ENCODE measurements at regions of chr1 and their contacts with region 1.

Region 1: DNA sequence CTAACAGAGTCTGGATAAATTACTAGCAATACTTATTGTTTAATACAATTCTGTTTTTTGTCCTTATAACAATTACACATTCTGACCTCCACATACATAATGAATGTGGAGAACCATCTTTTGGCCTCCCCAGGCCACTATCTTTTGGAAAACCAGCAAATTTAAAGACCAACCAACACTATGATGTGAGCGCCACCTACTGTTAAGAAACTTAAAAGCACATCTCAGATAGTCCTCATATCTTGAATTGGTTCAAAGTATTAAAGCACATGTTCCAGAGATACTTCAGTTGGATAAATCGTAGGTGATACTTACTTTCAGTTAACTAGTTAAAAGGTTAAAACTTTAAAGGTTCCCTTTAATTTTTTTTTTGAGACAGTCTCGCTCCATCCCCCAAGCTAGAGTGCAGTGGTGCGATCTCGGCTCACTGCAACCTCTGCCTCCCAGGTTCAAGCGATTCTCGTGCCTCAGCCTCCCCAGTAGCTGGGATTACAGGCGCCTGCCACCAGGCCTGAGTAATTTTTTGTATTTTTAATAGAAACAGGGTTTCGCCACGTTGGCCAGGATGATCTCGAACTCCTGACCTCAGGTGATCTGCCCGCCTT is 29.3 kb upstream of the USP1 start:
- DNase-seq: peak in 3 of 9 experiments; percentile 18 to 65 (median 60)
- ATAC-seq: no peak
- H3K4me3 ChIP-seq: no peak overlapping the region
- H3K4me3 Mint-ChIP-seq: no peak overlapping the region
- H3K27ac ChIP-seq: no peak overlapping the region
- H3K27ac Mint-ChIP-seq: no peak overlapping the region
- H3K4me1 ChIP-seq: no peaks in the 10 kb centered on the region
- H3K4me1 Mint-ChIP-seq: no peaks in the 10 kb centered on the region
- H3K27me3 ChIP-seq: peaks cover 0 to 3% of the 10 kb centered on the region in 2 experiments
- H3K27me3 Mint-ChIP-seq: no peaks in the 10 kb centered on the region
- CTCF ChIP-seq: peak; percentile 97

Region 2: DNA sequence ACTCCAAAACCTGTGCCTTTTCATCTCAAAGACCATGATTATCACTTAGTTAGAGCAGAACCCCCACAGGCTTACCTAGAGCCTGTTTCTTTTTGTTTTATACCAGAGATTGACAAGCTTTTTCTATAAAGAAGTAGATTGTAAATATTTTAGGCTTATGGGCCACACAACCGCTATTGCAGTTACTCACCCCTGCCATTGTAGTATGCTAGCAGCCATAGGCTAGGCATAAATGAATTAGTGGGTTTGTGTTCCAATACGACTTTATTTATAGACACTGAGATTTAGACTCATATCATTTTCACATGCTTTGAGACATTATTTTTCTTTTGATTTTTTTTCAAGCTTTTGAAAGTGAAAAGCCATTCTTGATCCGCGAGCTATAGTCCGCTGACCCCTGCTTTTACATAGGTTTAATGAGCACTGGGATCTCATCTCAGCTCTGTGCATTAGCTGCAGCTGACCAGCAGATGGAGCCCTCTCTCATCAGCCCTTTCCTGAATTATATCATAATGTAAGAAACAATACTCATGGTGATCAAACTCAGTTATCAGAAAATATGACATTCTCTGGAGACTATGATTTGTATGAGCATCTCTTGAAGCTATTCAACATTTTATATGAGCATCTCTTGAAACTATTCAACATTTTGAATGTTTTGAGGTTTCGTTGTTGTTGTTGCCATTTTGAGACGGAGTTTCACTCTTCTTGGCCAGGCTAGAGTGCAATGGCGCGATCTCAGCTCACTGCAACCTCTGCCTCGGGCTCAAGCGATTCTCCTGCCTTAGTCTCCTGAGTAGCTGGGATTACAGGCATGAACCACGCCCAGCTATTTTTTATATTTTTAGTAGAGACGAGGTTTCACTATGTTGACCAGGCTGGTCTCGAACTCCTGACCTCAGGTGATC is 324.8 kb before region 1 on chr1:
- CTCF ChIA-PET with region 1: interaction called, 4 read pairs
- POLR2A ChIA-PET with region 1: interaction called, 3 read pairs
- intact Hi-C with region 1: loop called (anchors 1 kb)
- DNase-seq: peak in 6 of 9 experiments; percentile 10 to 48 (median 30)
- ATAC-seq: peak; percentile 40
- H3K4me3 ChIP-seq: no peak overlapping the region
- H3K4me3 Mint-ChIP-seq: no peak overlapping the region
- H3K27ac ChIP-seq: no peak overlapping the region
- H3K27ac Mint-ChIP-seq: no peak overlapping the region
- H3K4me1 ChIP-seq: no peaks in the 10 kb centered on the region
- H3K4me1 Mint-ChIP-seq: no peaks in the 10 kb centered on the region
- H3K27me3 ChIP-seq: no peaks in the 10 kb centered on the region
- H3K27me3 Mint-ChIP-seq: no peaks in the 10 kb centered on the region
- CTCF ChIP-seq: peak; percentile 87

Region 3: GRCh38 chr1:62175568-62176179 is 231.8 kb before region 1 on chr1:
- CTCF ChIA-PET with region 1: interaction called, 130 read pairs
- POLR2A ChIA-PET with region 1: no interaction called
- intact Hi-C with region 1: loop called in 1 of 2 experiments (anchors 1 kb)
- DNase-seq: peak in 5 of 9 experiments; percentile 1 to 62 (median 48)
- ATAC-seq: no peak
- H3K4me3 ChIP-seq: no peak overlapping the region
- H3K4me3 Mint-ChIP-seq: no peak overlapping the region
- H3K27ac ChIP-seq: no peak overlapping the region
- H3K27ac Mint-ChIP-seq: no peak overlapping the region
- H3K4me1 ChIP-seq: no peaks in the 10 kb centered on the region
- H3K4me1 Mint-ChIP-seq: no peaks in the 10 kb centered on the region
- H3K27me3 ChIP-seq: peaks cover 0 to 2% of the 10 kb centered on the region in 2 experiments
- H3K27me3 Mint-ChIP-seq: peaks cover 11% of the 10 kb centered on the region
- CTCF ChIP-seq: peak; percentile 78

Region 4: GRCh38 chr1:62271948-62272728 is 135.4 kb before region 1 on chr1:
- CTCF ChIA-PET with region 1: no interaction called
- POLR2A ChIA-PET with region 1: no interaction called
- intact Hi-C with region 1: loop called in 1 of 2 experiments (anchors 1 kb)
- DNase-seq: peak in 8 of 9 experiments; percentile 22 to 79 (median 50)
- ATAC-seq: peak; percentile 90
- H3K4me3 ChIP-seq: no peak overlapping the region
- H3K4me3 Mint-ChIP-seq: peak overlapping the region; percentile 54
- H3K27ac ChIP-seq: peak overlapping the region; percentile 4 to 64
- H3K27ac Mint-ChIP-seq: peak overlapping the region; percentile 90
- H3K4me1 ChIP-seq: peaks cover 25% of the 10 kb centered on the region
- H3K4me1 Mint-ChIP-seq: peaks cover 30% of the 10 kb centered on the region
- H3K27me3 ChIP-seq: no peaks in the 10 kb centered on the region
- H3K27me3 Mint-ChIP-seq: no peaks in the 10 kb centered on the region
- CTCF ChIP-seq: peak; percentile 13

Region 5: GRCh38 chr1:62299426-62300200 is 107.9 kb before region 1 on chr1:
- CTCF ChIA-PET with region 1: no interaction called
- POLR2A ChIA-PET with region 1: no interaction called
- intact Hi-C with region 1: no loop called
- DNase-seq: no peak
- ATAC-seq: no peak
- H3K4me3 ChIP-seq: no peak overlapping the region
- H3K4me3 Mint-ChIP-seq: no peak overlapping the region
- H3K27ac ChIP-seq: no peak overlapping the region
- H3K27ac Mint-ChIP-seq: no peak overlapping the region
- H3K4me1 ChIP-seq: peaks cover 13% of the 10 kb centered on the region
- H3K4me1 Mint-ChIP-seq: peaks cover 14% of the 10 kb centered on the region
- H3K27me3 ChIP-seq: no peaks in the 10 kb centered on the region
- H3K27me3 Mint-ChIP-seq: no peaks in the 10 kb centered on the region
- CTCF ChIP-seq: no peak

Region 6: GRCh38 chr1:62352387-62352786 is 55.1 kb before region 1 on chr1:
- CTCF ChIA-PET with region 1: no interaction called
- POLR2A ChIA-PET with region 1: no interaction called
- intact Hi-C with region 1: no loop called
- DNase-seq: no peak
- ATAC-seq: no peak
- H3K4me3 ChIP-seq: no peak overlapping the region
- H3K4me3 Mint-ChIP-seq: no peak overlapping the region
- H3K27ac ChIP-seq: no peak overlapping the region
- H3K27ac Mint-ChIP-seq: no peak overlapping the region
- H3K4me1 ChIP-seq: no peaks in the 10 kb centered on the region
- H3K4me1 Mint-ChIP-seq: no peaks in the 10 kb centered on the region
- H3K27me3 ChIP-seq: no peaks in the 10 kb centered on the region
- H3K27me3 Mint-ChIP-seq: no peaks in the 10 kb centered on the region
- CTCF ChIP-seq: no peak

Region 7: DNA sequence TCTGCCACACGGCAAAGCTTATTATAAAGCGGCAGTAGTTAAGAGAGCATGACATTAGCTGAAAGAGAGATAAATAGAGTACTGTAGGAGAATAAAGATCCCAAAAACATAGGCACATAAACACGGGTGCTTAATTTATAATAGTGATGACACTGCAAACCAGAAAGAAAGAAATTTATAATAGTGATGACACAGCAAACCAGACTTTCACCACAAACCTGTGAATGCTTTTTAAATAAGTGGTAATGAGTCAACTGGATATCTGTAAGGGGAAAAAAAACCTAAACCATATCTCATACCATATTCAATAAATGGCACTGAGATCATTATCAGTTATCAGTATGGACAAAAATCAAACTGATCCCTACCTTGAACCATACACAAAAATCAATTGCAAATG is 54.9 kb after region 1 on chr1:
- CTCF ChIA-PET with region 1: no interaction called
- POLR2A ChIA-PET with region 1: no interaction called
- intact Hi-C with region 1: loop called in 1 of 2 experiments (anchors 5 kb)
- DNase-seq: no peak
- ATAC-seq: no peak
- H3K4me3 ChIP-seq: no peak overlapping the region
- H3K4me3 Mint-ChIP-seq: no peak overlapping the region
- H3K27ac ChIP-seq: no peak overlapping the region
- H3K27ac Mint-ChIP-seq: no peak overlapping the region
- H3K4me1 ChIP-seq: no peaks in the 10 kb centered on the region
- H3K4me1 Mint-ChIP-seq: no peaks in the 10 kb centered on the region
- H3K27me3 ChIP-seq: no peaks in the 10 kb centered on the region
- H3K27me3 Mint-ChIP-seq: no peaks in the 10 kb centered on the region
- CTCF ChIP-seq: no peak

Region 8: DNA sequence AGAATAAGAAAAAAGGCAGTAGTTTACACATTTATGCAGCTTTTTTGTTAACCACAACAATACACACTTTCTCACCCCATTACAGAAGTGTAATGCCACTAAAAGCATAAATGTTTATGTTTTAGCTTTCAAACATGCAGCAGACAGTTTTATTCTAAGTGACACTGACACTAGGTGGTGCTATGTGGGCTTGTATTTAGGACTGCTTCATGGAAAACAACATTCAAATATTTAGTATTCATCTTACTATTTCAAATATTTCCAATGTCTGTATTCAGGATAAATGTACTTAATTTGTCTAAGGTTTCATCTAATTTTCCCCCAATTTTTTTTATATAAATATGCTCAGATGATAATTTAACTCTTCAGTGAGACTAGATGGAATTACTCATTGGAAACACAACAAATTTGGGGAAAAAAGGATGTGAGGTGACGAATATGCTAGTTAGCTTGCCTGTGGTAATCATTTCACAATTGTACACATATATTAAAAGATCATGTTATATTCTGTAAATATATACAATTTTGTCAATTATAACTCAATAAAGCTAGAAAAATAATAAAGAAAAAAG is 100.8 kb after region 1 on chr1:
- CTCF ChIA-PET with region 1: no interaction called
- POLR2A ChIA-PET with region 1: no interaction called
- intact Hi-C with region 1: no loop called
- DNase-seq: peak in 3 of 9 experiments; percentile 5 to 54 (median 39)
- ATAC-seq: no peak
- H3K4me3 ChIP-seq: no peak overlapping the region
- H3K4me3 Mint-ChIP-seq: no peak overlapping the region
- H3K27ac ChIP-seq: no peak overlapping the region
- H3K27ac Mint-ChIP-seq: no peak overlapping the region
- H3K4me1 ChIP-seq: no peaks in the 10 kb centered on the region
- H3K4me1 Mint-ChIP-seq: no peaks in the 10 kb centered on the region
- H3K27me3 ChIP-seq: no peaks in the 10 kb centered on the region
- H3K27me3 Mint-ChIP-seq: no peaks in the 10 kb centered on the region
- CTCF ChIP-seq: peak; percentile 62

Region 9: GRCh38 chr1:62746085-62746808 is 338.7 kb after region 1 on chr1:
- CTCF ChIA-PET with region 1: interaction called, 4 read pairs
- POLR2A ChIA-PET with region 1: no interaction called
- intact Hi-C with region 1: loop called in 1 of 2 experiments (anchors 10 kb)
- DNase-seq: peak in 2 of 9 experiments; percentile 44 to 59
- ATAC-seq: no peak
- H3K4me3 ChIP-seq: no peak overlapping the region
- H3K4me3 Mint-ChIP-seq: no peak overlapping the region
- H3K27ac ChIP-seq: no peak overlapping the region
- H3K27ac Mint-ChIP-seq: no peak overlapping the region
- H3K4me1 ChIP-seq: no peaks in the 10 kb centered on the region
- H3K4me1 Mint-ChIP-seq: no peaks in the 10 kb centered on the region
- H3K27me3 ChIP-seq: no peaks in the 10 kb centered on the region
- H3K27me3 Mint-ChIP-seq: peaks cover 5% of the 10 kb centered on the region
- CTCF ChIP-seq: peak; percentile 70

Measured in CD8-positive, alpha-beta T cell (primary cell).